ENCODE measurements at regions of chr11 and their contacts with region 1.

Region 1: GRCh38 chr11:96342961-96343711 is at the start of gene MAML2:
- DNase-seq: peak; percentile 92
- H3K4me3 ChIP-seq: peak within 1 kb of the TSS; percentile 68
- H3K27ac ChIP-seq: no peak within 1 kb of the TSS
- H3K4me1 ChIP-seq: peaks cover 39% of the 10 kb centered on the region
- CTCF ChIP-seq: peak; percentile 74
- total RNA-seq, gene MAML2: 0.54 and 1.0 TPM in 2 replicates

Region 2: DNA sequence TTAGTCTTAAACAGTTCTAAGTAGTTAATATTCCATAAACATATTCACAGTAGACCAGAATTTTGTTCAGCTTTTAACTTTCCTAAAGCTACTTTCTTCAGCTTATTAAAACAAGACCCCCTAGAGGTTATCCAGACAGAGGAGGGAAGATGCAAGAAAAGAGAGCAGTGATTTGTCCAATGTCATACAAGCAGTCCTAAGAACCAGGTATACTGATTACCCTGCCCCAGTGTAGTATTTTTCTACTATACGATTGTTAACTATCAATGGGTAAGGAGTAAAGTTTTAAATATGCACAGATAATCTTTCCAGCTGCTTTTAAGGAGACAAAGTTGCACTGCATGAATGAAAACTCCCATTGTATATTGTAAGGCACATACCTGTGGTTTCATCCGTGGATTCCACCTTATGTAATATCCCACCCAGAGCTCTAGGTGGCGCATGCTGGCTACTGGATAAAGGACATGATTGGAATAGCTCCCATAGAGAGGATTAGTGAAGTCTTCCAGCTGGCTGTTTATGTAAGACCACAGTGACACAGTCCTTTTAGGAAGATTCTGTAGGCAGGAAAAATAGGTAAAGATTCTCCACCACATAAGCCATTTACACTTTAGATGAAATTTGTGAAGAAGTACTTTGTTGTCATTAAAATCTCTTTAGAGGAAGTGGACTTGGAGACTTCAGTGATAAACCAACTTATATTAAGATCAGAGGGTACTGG is 507.2 kb before region 1 on chr11:
- CTCF ChIA-PET with region 1: no interaction called
- POLR2A ChIA-PET with region 1: interaction called, 4 read pairs
- intact Hi-C with region 1: loop called (anchors 1 kb)
- DNase-seq: peak; percentile 51
- H3K4me3 ChIP-seq: no peak overlapping the region
- H3K27ac ChIP-seq: no peak overlapping the region
- H3K4me1 ChIP-seq: no peaks in the 10 kb centered on the region
- CTCF ChIP-seq: peak; percentile 88

Region 3: DNA sequence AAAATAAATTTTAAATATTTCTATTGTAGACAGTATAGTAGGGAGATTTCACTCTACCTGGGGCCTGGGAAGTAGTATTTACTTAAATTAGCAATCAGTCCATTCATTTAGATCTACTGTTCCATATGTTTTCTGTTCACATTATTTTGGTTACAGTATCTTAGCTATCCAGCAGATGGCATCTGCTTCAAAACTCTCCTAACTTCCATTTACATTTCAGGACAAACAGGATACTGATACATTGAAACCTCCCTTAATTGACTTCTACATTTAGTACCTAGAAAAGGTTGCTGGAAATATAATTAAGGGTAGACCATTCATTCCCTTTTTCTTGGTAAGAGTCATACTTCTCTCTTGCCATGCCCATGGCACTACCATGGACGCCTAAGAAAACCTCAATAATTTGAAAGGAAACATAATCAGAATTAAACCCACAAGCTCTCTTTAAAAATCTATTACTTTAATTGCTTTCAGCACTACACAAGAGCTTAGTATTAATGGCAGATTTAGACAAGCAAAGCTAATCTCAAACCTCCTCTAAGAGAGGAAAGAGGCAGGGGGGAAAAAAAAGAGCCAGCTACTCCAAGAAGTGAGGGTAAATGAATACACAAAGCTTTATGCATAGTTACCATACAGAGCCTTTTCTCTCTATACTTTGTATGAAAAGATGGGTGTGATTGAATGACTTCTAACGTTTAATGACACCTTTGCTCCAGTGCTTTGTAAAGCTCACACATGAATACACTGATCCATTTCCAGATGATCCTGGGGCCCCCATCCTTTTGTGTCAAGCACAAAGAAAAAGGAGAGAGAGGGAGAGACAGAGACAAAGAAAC is 288.0 kb before region 1 on chr11:
- CTCF ChIA-PET with region 1: interaction called, 21 read pairs
- POLR2A ChIA-PET with region 1: interaction called, 3 read pairs
- intact Hi-C with region 1: loop called (anchors 1 kb)
- DNase-seq: peak; percentile 54
- H3K4me3 ChIP-seq: no peak overlapping the region
- H3K27ac ChIP-seq: no peak overlapping the region
- H3K4me1 ChIP-seq: no peaks in the 10 kb centered on the region
- CTCF ChIP-seq: peak; percentile 84

Region 4: DNA sequence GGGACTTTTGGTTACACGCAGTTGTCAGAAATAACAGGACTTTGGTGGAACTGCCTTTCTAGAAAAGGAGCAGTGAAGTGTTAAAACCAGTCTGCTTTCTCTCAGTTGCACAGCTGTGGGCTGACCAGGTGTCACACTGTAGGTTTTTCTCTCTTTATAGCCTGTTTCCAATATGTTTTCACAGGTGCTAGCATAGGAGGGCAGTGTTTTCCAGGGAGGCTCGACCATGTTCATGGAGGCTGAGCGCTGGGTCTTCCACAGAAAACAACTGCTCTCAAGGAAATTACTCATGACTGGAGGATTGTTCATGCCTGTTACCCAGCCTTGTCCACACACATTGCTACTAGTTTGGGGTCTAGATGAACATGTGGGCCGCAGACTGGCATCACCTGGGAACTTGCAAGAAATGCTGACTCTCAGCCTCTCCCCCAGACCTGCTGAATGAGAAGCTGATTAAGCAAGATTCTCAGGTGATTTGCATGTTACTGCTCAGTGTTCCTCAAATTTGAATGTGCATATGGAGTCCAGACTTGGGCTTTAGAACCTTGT is 157.8 kb before region 1 on chr11:
- CTCF ChIA-PET with region 1: interaction called, 4 read pairs
- POLR2A ChIA-PET with region 1: interaction called, 4 read pairs
- intact Hi-C with region 1: loop called (anchors 2 kb)
- DNase-seq: peak; percentile 72
- H3K4me3 ChIP-seq: no peak overlapping the region
- H3K27ac ChIP-seq: no peak overlapping the region
- H3K4me1 ChIP-seq: peaks cover 16% of the 10 kb centered on the region
- CTCF ChIP-seq: no peak

Region 5: DNA sequence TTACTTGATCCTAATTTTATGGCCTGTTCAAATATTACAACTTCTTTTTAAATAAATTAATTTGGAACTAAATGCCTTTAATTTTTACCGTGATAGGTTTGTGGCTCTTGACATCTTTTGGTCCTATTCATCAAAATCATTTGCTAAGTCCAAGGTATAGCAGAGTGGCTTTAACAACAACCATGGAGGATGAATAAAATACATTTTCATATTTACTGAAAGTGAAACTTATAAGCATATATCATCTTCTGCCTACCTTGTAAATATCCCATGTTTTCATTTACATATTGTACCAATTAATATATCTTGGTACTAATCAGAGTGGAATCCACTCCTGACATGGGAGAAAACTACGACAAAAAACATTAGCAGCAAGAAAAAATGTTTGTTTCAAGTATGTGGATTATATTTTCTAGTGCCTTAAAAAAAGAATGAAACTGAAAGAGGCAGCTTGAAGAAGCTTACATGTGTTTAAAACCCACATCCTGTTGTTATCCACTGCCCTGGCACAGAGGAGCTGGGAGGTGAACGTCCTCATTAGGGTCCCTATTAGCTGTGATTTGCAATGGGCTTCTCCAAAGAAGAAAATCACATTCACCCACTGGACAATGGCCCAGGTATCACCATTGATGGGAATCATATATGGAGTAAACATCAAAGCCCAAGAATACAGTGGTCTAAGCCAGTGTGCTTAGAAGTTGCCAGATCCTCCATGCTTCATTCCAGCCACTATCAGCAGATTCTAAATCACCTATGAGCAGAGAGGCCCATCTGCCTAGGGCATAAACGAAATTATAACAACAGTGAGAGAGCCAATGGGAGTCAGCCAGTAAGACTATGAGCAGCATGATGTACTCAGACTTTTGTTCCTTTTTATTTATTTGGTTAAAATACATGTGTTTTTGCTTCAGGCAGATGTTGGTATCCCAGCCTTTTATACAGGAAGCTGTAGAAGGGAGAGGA is 84.9 kb before region 1 on chr11:
- CTCF ChIA-PET with region 1: no interaction called
- POLR2A ChIA-PET with region 1: interaction called, 3 read pairs
- intact Hi-C with region 1: loop called (anchors 2 kb)
- DNase-seq: peak; percentile 81
- H3K4me3 ChIP-seq: peak overlapping the region; percentile 43
- H3K27ac ChIP-seq: peak overlapping the region; percentile 81
- H3K4me1 ChIP-seq: peaks cover 71% of the 10 kb centered on the region
- CTCF ChIP-seq: no peak

Region 6: DNA sequence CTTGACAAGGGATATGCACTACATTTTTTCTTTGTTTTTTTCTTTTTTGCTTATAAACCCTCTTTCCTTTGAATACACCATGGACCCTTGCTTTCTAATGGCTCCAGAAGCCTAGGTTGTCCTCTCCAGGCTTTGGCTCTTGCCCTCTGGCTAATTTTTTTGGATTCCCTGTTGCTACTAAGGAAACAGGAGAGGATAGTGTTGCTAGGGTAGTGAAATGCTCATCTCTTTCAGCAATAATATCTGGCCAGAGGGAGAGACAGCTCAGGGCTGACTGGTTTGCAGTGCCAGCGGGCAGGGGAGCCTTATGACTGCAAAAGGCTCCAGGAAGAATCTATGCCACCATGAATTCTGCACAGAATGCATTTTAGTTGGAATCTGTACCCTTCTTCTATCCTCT is 262.8 kb after region 1 on chr11:
- CTCF ChIA-PET with region 1: no interaction called
- POLR2A ChIA-PET with region 1: no interaction called
- intact Hi-C with region 1: no loop called
- DNase-seq: no peak
- H3K4me3 ChIP-seq: no peak overlapping the region
- H3K27ac ChIP-seq: no peak overlapping the region
- H3K4me1 ChIP-seq: no peaks in the 10 kb centered on the region
- CTCF ChIP-seq: no peak